ENCODE measurements at regions of chr6 and their contacts with region 1.

Region 1: DNA sequence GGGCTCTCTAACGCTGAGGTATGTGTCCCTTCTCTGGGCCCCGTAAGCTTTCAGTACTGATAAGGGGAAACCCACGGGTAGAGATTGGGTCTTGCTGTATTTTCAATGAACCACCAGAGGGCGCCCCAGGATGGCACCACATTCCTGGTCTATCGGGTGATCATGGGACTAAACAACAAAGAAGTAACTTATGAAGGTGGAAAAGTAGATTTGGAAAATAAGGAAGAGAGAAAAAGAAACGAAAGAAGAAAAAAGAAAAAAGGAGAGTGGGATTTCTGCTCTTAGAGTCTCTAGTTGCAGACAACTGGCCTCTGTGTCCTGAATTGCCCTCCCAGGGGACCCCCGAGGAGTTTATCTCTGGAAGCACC is 93.8 kb downstream of the GMPR start:
- DNase-seq: no peak
- H3K4me3 ChIP-seq: no peak overlapping the region
- H3K27me3 ChIP-seq: no peaks in the 10 kb centered on the region
- CTCF ChIP-seq: peak; percentile 91

Region 2: DNA sequence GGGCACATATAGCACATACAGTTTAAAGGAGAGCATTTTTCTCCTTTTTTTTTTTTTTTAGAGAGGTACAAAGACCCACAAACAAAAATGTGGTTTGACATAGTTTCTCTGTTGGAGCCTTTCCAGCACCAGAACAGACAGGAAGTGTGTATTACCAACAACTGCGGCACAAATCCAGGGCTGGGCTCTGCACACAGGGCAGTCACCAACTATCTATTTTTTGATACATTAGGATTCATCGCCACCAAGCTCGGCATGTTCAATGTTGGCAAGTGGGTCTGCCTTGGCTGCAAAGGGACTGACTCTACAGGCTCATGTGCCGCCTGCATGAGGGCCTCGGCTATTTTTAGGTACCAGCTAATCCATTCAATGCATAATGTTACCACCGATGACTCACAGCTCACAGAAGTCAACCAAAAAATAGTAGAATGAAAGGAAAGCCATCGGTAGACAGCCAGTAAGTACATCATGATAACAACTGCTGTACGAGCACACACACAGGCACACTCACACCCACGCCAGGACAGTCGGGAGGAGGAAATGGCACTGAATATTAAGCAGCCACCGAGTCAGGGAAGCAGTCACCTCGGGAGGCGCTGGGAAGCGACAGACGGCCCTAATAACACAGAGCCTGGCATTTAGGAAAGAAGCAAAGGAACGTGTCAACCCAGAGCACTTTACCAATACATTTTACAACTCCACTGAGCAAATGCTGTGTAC is 12.2 kb before region 1 on chr6:
- CTCF ChIA-PET with region 1: interaction called, 70 read pairs
- POLR2A ChIA-PET with region 1: interaction called, 3 read pairs
- DNase-seq: peak; percentile 87
- H3K4me3 ChIP-seq: no peak overlapping the region
- H3K27me3 ChIP-seq: no peaks in the 10 kb centered on the region
- CTCF ChIP-seq: no peak

Region 3: DNA sequence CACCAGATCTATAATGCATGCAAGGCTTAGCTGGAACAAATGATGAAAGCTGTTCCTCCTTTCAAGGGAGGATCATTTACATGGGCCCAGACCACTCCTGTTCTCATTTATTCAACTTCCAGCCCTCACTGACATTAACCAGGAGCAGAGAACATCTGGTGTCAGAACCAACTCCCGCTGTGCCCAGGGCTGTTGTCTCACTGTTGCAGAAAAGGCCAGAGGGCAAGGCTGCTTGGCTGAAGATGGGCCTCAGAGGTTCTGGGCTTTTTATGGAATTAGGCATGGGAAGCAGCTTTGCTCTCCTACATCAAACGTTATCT is 70.4 kb after region 1 on chr6:
- CTCF ChIA-PET with region 1: interaction called, 13 read pairs
- POLR2A ChIA-PET with region 1: no interaction called
- DNase-seq: peak; percentile 21
- H3K4me3 ChIP-seq: no peak overlapping the region
- H3K27me3 ChIP-seq: no peaks in the 10 kb centered on the region; the same call in 1 of the 2 replicates
- CTCF ChIP-seq: no peak

Region 4: DNA sequence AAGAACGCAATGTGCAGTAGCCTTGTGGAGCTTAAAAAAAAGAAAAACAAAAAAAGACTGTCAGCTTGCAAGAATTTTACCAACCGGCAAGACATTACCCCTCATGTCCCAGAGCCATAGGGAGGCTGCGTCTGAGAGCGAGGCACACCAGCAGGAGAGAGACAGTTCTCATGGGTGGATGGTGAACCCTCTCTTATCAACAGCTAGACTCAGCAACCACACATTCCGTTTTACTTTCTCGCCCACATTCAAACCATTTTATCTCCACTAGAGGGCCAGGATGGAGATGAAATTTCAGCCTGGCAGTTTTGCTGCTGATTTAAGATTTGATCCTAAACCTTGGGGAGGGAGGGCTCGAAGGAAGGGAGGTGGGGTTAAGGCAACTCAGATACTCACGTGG is 182.1 kb after region 1 on chr6:
- CTCF ChIA-PET with region 1: interaction called, 10 read pairs
- POLR2A ChIA-PET with region 1: interaction called, 3 read pairs
- DNase-seq: no peak
- H3K4me3 ChIP-seq: no peak overlapping the region
- H3K27me3 ChIP-seq: no peaks in the 10 kb centered on the region
- CTCF ChIP-seq: peak; percentile 59